MCF 10A (cell line): ENCODE measurements at regions of chr13 and their contacts with region 1.

Region 1: DNA sequence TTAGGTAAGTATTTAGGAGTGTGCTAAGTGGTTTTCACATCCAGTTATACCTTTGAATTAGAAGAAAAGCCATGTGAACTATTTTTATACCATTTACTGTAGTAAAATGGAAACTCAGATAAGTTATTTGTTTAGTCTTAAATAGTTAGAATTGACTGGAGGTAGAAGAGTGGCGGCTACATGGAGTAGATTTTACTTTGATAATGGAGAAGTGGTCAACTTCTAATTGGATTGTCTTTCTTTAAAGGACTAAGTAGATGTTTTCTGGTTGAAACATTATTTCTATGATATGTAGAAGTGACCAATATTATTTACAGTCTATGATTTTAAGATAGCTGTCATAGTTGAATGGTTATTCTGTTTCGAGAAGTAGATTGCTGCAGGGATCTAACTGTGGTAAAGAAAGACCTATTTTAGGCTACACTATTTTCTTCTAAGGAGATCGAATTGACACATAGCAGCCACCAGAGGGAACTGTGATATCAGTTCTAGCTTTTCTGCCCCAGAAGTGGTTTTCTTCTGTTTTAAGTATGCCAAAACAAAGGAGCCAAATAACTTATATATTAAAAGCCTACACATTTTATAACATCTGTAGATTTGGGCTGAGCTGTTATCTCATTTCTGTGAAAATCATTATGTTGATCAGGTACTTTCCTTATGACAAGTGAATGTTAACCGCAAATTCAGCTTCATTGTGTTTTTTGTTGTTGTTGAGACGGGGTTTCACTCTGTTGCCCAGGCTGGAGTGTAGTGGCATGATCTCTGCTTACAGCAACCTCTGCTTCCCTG is 26.1 kb downstream of the ZMYM2 start:
- DNase-seq: peak; percentile 38
- H3K4me3 Mint-ChIP-seq: no peak overlapping the region
- H3K27ac Mint-ChIP-seq: no peak overlapping the region
- H3K4me1 Mint-ChIP-seq: no peaks in the 10 kb centered on the region
- H3K27me3 Mint-ChIP-seq: no peaks in the 10 kb centered on the region
- CTCF ChIP-seq: peak; percentile 60

Region 2: DNA sequence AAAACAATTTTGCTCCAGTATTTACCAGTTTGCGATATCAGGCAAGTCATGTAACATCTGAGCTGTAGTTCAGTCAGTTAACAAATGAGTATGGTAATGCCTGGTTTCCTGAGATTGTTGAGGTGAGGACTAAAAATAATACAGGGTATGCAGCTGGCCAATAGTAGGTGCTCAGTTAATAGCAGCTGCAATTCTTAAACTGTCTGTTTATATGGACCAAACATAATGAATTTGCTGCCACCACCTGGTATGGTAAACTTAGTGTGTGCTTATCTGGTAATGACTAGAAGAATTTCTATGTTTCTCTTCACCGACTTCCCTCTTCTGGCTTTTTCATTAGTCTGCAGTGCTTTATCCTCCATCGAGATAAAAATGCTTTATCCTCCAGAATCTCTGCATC is 17.0 kb before region 1 on chr13:
- CTCF ChIA-PET with region 1: interaction called, 13 read pairs
- POLR2A ChIA-PET with region 1: interaction called, 4 read pairs
- intact Hi-C with region 1: no loop called
- DNase-seq: no peak
- H3K4me3 Mint-ChIP-seq: no peak overlapping the region
- H3K27ac Mint-ChIP-seq: no peak overlapping the region
- H3K4me1 Mint-ChIP-seq: no peaks in the 10 kb centered on the region
- H3K27me3 Mint-ChIP-seq: no peaks in the 10 kb centered on the region
- CTCF ChIP-seq: no peak

Region 3: DNA sequence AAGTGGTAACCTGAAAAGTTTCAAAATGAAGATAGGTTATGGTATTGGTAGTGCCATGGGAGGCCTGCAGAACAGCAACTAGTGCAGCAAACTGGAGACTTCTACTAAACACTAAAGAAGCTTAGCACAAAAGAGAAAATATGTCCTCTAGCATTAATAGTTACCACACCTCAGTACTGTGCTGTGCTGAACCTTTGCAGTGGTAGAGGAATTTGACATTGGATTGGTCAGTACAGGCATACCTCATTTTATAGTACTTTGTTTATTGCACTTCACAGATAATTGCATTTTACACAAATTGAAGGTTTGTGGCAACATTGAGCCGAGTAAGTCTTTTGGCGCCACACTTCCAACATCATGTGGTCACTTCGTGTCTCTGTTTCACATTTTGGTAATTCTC is 14.3 kb after region 1 on chr13:
- CTCF ChIA-PET with region 1: interaction called, 22 read pairs
- POLR2A ChIA-PET with region 1: interaction called, 14 read pairs
- intact Hi-C with region 1: no loop called
- DNase-seq: no peak
- H3K4me3 Mint-ChIP-seq: no peak overlapping the region
- H3K27ac Mint-ChIP-seq: no peak overlapping the region
- H3K4me1 Mint-ChIP-seq: peaks cover 12% of the 10 kb centered on the region
- H3K27me3 Mint-ChIP-seq: no peaks in the 10 kb centered on the region
- CTCF ChIP-seq: no peak

Region 4: GRCh38 chr13:20006206-20006605 is 21.6 kb after region 1 on chr13:
- CTCF ChIA-PET with region 1: interaction called, 20 read pairs
- POLR2A ChIA-PET with region 1: no interaction called
- intact Hi-C with region 1: no loop called
- DNase-seq: peak; percentile 26
- H3K4me3 Mint-ChIP-seq: no peak overlapping the region
- H3K27ac Mint-ChIP-seq: no peak overlapping the region
- H3K4me1 Mint-ChIP-seq: peaks cover 4% of the 10 kb centered on the region
- H3K27me3 Mint-ChIP-seq: no peaks in the 10 kb centered on the region
- CTCF ChIP-seq: no peak

Region 5: DNA sequence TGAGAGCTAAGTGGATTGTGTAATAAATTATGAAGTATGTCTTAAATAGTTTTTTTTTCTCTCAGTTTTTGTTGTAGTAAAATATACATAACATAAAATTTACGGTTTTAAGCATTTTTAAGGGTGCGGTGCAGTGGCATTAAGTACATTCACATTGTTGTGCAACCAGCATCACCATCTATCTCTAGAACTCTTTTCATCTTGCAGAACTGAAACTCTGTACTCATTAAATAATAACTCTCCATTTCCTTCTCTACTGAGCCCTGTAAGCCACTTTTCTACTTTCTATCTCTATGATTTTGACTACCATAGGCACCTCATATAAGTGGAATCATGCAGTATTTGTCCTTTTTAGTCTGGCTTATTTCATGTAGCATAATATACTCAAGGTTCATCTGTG is 89.2 kb after region 1 on chr13:
- CTCF ChIA-PET with region 1: interaction called, 14 read pairs
- POLR2A ChIA-PET with region 1: no interaction called
- intact Hi-C with region 1: no loop called
- DNase-seq: no peak
- H3K4me3 Mint-ChIP-seq: no peak overlapping the region
- H3K27ac Mint-ChIP-seq: no peak overlapping the region
- H3K4me1 Mint-ChIP-seq: no peaks in the 10 kb centered on the region
- H3K27me3 Mint-ChIP-seq: no peaks in the 10 kb centered on the region
- CTCF ChIP-seq: no peak